Gastrocnemius medialis (tissue), 4 donors: ENCODE measurements at regions of chr16 and their contacts with region 1.

Region 1: DNA sequence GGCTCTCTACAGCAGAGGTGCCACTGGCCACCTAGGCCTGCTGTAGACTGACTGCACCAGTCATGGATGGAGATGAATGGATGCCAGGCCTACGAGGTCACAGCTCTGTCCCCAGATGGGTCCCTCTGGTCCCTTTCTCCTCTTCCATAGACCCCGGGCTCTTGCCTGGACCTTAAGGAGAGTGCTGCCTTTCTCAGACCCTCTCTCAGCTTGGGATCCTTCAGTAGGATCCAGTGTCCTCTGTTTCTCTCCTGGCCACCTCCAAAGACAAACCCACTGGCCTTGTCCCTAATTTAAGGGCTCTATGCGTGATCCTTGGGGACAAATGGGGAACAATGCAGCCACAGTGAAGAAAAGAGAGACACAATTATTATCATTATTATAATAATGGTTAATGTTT is 189.3 kb upstream of the C16orf82 start:
- DNase-seq: no peak
- ATAC-seq: no peak
- H3K4me3 ChIP-seq: no peak overlapping the region
- H3K27ac ChIP-seq: no peak overlapping the region
- H3K4me1 ChIP-seq: no peaks in the 10 kb centered on the region
- H3K27me3 ChIP-seq: no peaks in the 10 kb centered on the region
- CTCF ChIP-seq: no peak
- POLR2A ChIP-seq: no peak

Region 2: GRCh38 chr16:26816885-26817571 is 60.4 kb before region 1 on chr16:
- in situ Hi-C with region 1: loop called in 1 of 4 experiments (anchors 10 kb)
- intact Hi-C with region 1: no loop called
- DNase-seq: no peak
- ATAC-seq: no peak
- H3K4me3 ChIP-seq: no peak overlapping the region
- H3K27ac ChIP-seq: no peak overlapping the region
- H3K4me1 ChIP-seq: no peaks in the 10 kb centered on the region
- H3K27me3 ChIP-seq: no peaks in the 10 kb centered on the region
- CTCF ChIP-seq: no peak
- POLR2A ChIP-seq: no peak

Region 3: DNA sequence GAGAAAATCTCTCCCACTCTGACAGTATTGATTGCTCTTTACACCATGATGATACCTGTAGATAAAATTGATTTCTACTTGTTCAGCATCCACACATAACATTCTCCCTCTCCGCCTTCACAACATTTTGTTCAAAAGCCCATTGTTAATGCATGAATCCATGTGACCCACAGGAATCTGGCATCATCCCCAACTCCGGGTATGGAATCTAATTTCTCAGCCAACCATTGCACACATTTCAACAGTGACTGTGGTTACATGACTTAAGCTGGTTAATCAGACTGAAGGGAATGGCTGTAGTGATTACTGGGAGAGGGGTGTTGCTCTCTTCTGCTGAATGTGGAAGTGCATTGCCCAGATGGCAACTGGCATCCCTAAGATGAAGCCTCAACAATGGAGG is 27.9 kb after region 1 on chr16:
- in situ Hi-C with region 1: no loop called
- intact Hi-C with region 1: no loop called
- DNase-seq: no peak
- ATAC-seq: no peak
- H3K4me3 ChIP-seq: no peak overlapping the region
- H3K27ac ChIP-seq: no peak overlapping the region
- H3K4me1 ChIP-seq: no peaks in the 10 kb centered on the region
- H3K27me3 ChIP-seq: no peaks in the 10 kb centered on the region
- CTCF ChIP-seq: no peak
- POLR2A ChIP-seq: no peak